IMR-90 (cell line): ENCODE measurements at regions of chr2 and their contacts with region 1.

Region 1: GRCh38 chr2:224816816-224817215 is 100.7 kb upstream of the CCDC195 start:
- DNase-seq: peak; percentile 89
- ATAC-seq: peak; percentile 80
- H3K4me3 ChIP-seq: no peak overlapping the region
- H3K27ac ChIP-seq: peak overlapping the region; percentile 30
- H3K4me1 ChIP-seq: peaks cover 12% of the 10 kb centered on the region
- H3K27me3 ChIP-seq: no peaks in the 10 kb centered on the region
- CTCF ChIP-seq: no peak
- POLR2A ChIP-seq: no peak
- RAD21 ChIP-seq: no peak

Region 2: GRCh38 chr2:224793946-224794345 is 22.9 kb before region 1 on chr2:
- CTCF ChIA-PET with region 1: no interaction called
- POLR2A ChIA-PET with region 1: no interaction called
- dilution Hi-C with region 1: no loop called
- in situ Hi-C with region 1: no loop called
- intact Hi-C with region 1: no loop called
- DNase-seq: no peak
- ATAC-seq: no peak; the same call in 1 of the 2 replicates
- H3K4me3 ChIP-seq: no peak overlapping the region
- H3K27ac ChIP-seq: no peak overlapping the region
- H3K4me1 ChIP-seq: no peaks in the 10 kb centered on the region
- H3K27me3 ChIP-seq: no peaks in the 10 kb centered on the region
- CTCF ChIP-seq: no peak
- POLR2A ChIP-seq: no peak
- RAD21 ChIP-seq: no peak

Region 3: DNA sequence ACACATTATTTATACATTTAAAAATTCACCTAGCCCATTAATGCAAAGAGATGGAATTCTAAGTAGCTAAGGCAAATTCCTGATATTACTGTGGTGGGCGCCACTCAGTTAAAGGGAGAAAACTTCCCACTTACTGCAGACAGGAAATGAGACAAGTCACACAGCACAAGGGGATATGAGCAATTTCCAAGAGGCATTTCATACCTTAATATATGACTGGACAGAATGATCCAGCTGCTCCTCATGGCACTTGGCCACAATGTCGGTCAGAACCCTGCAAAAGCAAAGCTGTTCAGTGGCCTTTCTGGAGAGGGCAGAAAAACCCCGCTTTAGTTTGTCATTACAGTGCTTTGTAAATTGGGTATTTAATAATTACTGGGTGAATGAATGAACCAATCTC is 20.7 kb after region 1 on chr2:
- CTCF ChIA-PET with region 1: no interaction called
- POLR2A ChIA-PET with region 1: no interaction called
- dilution Hi-C with region 1: no loop called
- in situ Hi-C with region 1: no loop called
- intact Hi-C with region 1: loop called (anchors 2 kb)
- DNase-seq: peak; percentile 95
- ATAC-seq: peak; percentile 89
- H3K4me3 ChIP-seq: no peak overlapping the region
- H3K27ac ChIP-seq: no peak overlapping the region
- H3K4me1 ChIP-seq: peaks cover 4% of the 10 kb centered on the region; the same call in 1 of the 2 replicates
- H3K27me3 ChIP-seq: no peaks in the 10 kb centered on the region
- CTCF ChIP-seq: peak; percentile 22
- POLR2A ChIP-seq: no peak
- RAD21 ChIP-seq: peak; percentile 42; the same call in 1 of the 2 replicates

Region 4: GRCh38 chr2:224885836-224886547 is 69.2 kb after region 1 on chr2:
- CTCF ChIA-PET with region 1: no interaction called
- POLR2A ChIA-PET with region 1: no interaction called
- dilution Hi-C with region 1: no loop called
- in situ Hi-C with region 1: no loop called
- intact Hi-C with region 1: no loop called
- DNase-seq: peak; percentile 93
- ATAC-seq: peak; percentile 63
- H3K4me3 ChIP-seq: no peak overlapping the region
- H3K27ac ChIP-seq: peak overlapping the region; percentile 81
- H3K4me1 ChIP-seq: peaks cover 25% of the 10 kb centered on the region
- H3K27me3 ChIP-seq: no peaks in the 10 kb centered on the region
- CTCF ChIP-seq: no peak
- POLR2A ChIP-seq: no peak
- RAD21 ChIP-seq: no peak

Region 5: GRCh38 chr2:225400060-225400511 is 583.3 kb after region 1 on chr2:
- CTCF ChIA-PET with region 1: no interaction called
- POLR2A ChIA-PET with region 1: no interaction called
- dilution Hi-C with region 1: no loop called
- in situ Hi-C with region 1: no loop called
- intact Hi-C with region 1: no loop called
- DNase-seq: peak; percentile 56
- ATAC-seq: peak; percentile 80
- H3K4me3 ChIP-seq: no peak overlapping the region
- H3K27ac ChIP-seq: no peak overlapping the region
- H3K4me1 ChIP-seq: no peaks in the 10 kb centered on the region
- H3K27me3 ChIP-seq: no peaks in the 10 kb centered on the region
- CTCF ChIP-seq: no peak
- POLR2A ChIP-seq: no peak
- RAD21 ChIP-seq: no peak